ENCODE measurements at regions of chr4 and their contacts with region 1.

Region 1: GRCh38 chr4:123776254-123776653 is 379.7 kb downstream of the SPRY1 start:
- DNase-seq: peak; percentile 25
- ATAC-seq: peak; percentile 97
- H3K4me3 ChIP-seq: no peak overlapping the region
- H3K27ac ChIP-seq: no peak overlapping the region
- H3K4me1 ChIP-seq: peaks cover 3% of the 10 kb centered on the region; the same call in 1 of the 2 replicates
- H3K27me3 ChIP-seq: no peaks in the 10 kb centered on the region
- CTCF ChIP-seq: no peak
- EP300 ChIP-seq: peak in 1 of 2 experiments; percentile 74; a peak in 1 of 4 replicates
- POLR2A ChIP-seq: no peak
- RAD21 ChIP-seq: no peak

Region 2: GRCh38 chr4:123380728-123381716 is 395.2 kb before region 1 on chr4:
- CTCF ChIA-PET with region 1: no interaction called
- POLR2A ChIA-PET with region 1: no interaction called
- RAD21 ChIA-PET with region 1: no interaction called
- SMC1A ChIA-PET with region 1: no interaction called
- in situ Hi-C with region 1: no loop called
- intact Hi-C with region 1: no loop called
- DNase-seq: no peak
- ATAC-seq: peak; percentile 88
- H3K4me3 ChIP-seq: no peak overlapping the region
- H3K27ac ChIP-seq: no peak overlapping the region
- H3K4me1 ChIP-seq: no peaks in the 10 kb centered on the region; the same call in 1 of the 2 replicates
- H3K27me3 ChIP-seq: no peaks in the 10 kb centered on the region; a peak in 2 of 4 replicates
- CTCF ChIP-seq: no peak
- EP300 ChIP-seq: no peak
- POLR2A ChIP-seq: no peak
- RAD21 ChIP-seq: no peak

Region 3: DNA sequence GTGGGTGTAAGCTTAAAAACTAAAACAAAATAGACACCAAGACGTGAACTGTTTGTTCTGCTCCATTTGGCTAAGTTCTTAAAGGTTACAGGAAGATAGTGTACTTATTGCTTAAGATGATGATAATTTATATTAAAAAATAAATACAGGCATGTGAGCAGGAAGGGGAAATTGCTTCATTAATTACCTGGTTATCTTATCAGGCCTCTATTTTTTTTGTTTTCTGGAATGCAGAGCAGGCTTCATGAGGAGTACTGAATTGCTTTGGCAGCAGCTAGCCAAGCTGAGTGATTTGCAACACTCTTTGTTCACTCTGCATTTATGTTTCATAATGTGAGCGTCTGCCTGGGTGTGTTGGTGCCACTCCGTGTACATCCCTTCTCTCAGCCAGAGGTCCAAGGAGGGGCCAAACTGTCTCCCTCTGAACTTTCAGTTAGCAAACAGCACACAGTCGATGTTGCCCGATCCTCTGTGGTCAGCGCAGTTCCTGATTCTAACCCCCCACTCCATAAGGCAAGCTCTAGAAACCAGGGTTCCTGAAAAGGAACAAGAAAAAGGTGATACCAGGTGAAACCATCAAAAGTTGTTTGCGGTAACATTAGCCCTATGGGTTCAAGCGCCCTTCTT is 31.5 kb before region 1 on chr4:
- CTCF ChIA-PET with region 1: interaction called, 10 read pairs
- POLR2A ChIA-PET with region 1: no interaction called
- RAD21 ChIA-PET with region 1: no interaction called
- SMC1A ChIA-PET with region 1: interaction called, 3 read pairs
- in situ Hi-C with region 1: no loop called
- intact Hi-C with region 1: no loop called
- DNase-seq: no peak
- ATAC-seq: no peak
- H3K4me3 ChIP-seq: no peak overlapping the region
- H3K27ac ChIP-seq: no peak overlapping the region
- H3K4me1 ChIP-seq: no peaks in the 10 kb centered on the region
- H3K27me3 ChIP-seq: no peaks in the 10 kb centered on the region
- CTCF ChIP-seq: no peak
- EP300 ChIP-seq: no peak
- POLR2A ChIP-seq: no peak
- RAD21 ChIP-seq: no peak

Region 4: GRCh38 chr4:124105212-124105611 is 329.0 kb after region 1 on chr4:
- CTCF ChIA-PET with region 1: interaction called, 3 read pairs
- POLR2A ChIA-PET with region 1: no interaction called
- RAD21 ChIA-PET with region 1: no interaction called
- SMC1A ChIA-PET with region 1: no interaction called
- in situ Hi-C with region 1: loop called (anchors 10 kb)
- intact Hi-C with region 1: no loop called
- DNase-seq: no peak
- ATAC-seq: no peak
- H3K4me3 ChIP-seq: no peak overlapping the region
- H3K27ac ChIP-seq: no peak overlapping the region
- H3K4me1 ChIP-seq: no peaks in the 10 kb centered on the region
- H3K27me3 ChIP-seq: no peaks in the 10 kb centered on the region
- CTCF ChIP-seq: no peak
- EP300 ChIP-seq: no peak
- POLR2A ChIP-seq: no peak
- RAD21 ChIP-seq: no peak

Region 5: DNA sequence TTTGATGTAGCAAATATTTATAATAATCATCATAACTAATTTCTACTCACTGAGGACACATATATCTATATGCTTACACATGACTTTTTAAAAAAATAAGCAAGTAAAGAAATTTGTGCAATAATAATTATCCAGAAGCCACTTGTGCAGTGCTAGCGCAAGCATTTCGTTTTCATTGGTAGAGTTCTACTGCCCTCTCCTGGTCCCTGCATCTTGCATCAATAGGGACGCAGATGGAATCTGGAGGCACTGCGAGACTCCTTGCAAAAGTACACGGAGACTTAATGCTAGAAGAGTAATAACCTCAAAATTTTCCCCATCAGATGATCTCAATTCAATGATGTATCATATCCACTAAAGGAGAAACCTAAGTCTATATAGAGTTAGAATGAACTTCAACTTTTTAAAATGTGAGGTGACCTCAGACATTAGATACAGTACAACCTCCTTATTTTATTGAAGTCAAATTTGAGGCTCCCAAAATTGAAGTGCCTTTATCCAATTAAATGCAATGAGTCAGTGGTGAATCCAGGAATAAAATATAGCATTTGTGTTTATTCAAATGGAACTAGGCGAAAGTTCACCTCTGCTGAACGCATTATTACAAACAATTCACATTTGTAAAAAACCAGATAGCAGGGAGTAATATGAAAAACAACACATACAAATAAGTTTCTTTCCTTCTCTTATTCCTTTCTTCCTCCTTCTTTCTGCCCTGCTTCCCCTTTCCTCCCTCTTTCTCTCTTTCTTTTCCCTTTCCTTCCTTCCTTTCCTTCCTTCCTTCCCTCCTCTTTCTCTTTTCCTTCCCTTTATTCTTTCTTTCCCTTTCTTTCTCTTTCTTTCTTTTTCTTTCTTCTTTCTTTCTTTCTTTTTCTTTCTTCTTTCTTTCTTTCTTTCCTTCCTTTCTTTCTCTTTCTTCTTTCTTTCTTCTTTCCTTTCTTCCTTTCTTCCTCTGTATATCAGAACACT is 486.2 kb after region 1 on chr4:
- CTCF ChIA-PET with region 1: interaction called, 14 read pairs
- POLR2A ChIA-PET with region 1: no interaction called
- RAD21 ChIA-PET with region 1: interaction called, 7 read pairs
- SMC1A ChIA-PET with region 1: interaction called, 8 read pairs
- in situ Hi-C with region 1: loop called (anchors 5 kb)
- intact Hi-C with region 1: loop called (anchors 1 kb)
- DNase-seq: peak; percentile 11
- ATAC-seq: peak; percentile 88
- H3K4me3 ChIP-seq: no peak overlapping the region
- H3K27ac ChIP-seq: no peak overlapping the region
- H3K4me1 ChIP-seq: no peaks in the 10 kb centered on the region
- H3K27me3 ChIP-seq: no peaks in the 10 kb centered on the region
- CTCF ChIP-seq: peak; percentile 69 to 82 (median 74)
- EP300 ChIP-seq: no peak
- POLR2A ChIP-seq: no peak
- RAD21 ChIP-seq: peak; percentile 90